ENCODE measurements at regions of chr3 and their contacts with region 1.

Region 1: DNA sequence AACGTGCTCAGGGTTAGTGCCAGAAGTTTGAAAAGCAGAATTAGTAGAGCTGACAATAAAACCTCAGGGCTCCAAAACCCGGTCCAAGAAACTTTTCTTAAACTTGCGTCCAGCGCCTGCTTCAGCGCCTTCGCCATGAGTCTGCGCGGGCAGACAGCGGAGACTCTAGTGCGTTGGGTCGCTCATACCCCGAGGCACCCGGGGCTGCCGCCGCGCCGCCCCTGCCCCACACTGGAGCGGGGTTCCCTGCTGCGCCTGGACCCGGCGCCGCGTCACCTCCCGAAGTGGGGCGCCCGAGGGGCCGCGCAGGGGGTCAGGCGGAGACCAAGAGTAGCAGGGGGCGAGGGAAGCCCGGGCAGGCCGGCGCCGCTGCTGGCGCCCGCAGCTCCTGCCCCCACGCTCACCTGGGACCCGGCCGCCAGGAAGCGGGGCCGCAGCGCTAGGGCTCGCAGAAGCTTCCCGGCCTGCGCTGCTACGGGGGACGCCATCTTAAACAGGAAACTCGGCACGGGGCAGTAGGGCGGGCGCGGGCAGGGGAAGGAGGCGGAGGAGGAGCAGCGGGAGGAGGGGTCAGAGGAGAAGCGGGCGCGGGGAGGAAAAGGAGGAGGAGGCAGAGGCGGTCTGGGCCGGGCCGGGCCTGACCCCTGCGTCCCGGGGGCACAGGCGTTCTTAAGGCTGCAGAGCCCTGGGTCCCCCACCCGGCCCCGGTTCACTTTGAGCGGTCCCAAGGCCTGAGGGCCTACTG is at the start of gene SUCLG2:
- DNase-seq: peak; percentile 80
- ATAC-seq: peak; percentile 83
- H3K4me3 Mint-ChIP-seq: peak within 1 kb of the TSS; percentile 86
- H3K27ac Mint-ChIP-seq: peak within 1 kb of the TSS; percentile 87
- H3K4me1 Mint-ChIP-seq: peaks cover 63% of the 10 kb centered on the region
- H3K27me3 Mint-ChIP-seq: no peaks in the 10 kb centered on the region
- CTCF ChIP-seq: no peak
- total RNA-seq, gene SUCLG2: 38.9 and 40.8 TPM in 2 replicates

Region 2: GRCh38 chr3:66220602-66221377 is 1433.5 kb before region 1 on chr3 and contains the start of gene SLC25A26:
- CTCF ChIA-PET with region 1: no interaction called
- POLR2A ChIA-PET with region 1: no interaction called
- intact Hi-C with region 1: loop called (anchors 1 kb)
- DNase-seq: peak; percentile 90
- ATAC-seq: peak; percentile 96
- H3K4me3 Mint-ChIP-seq: peak within 1 kb of the TSS; percentile 98
- H3K27ac Mint-ChIP-seq: peak within 1 kb of the TSS; percentile 93
- H3K4me1 Mint-ChIP-seq: peaks cover 40% of the 10 kb centered on the region
- H3K27me3 Mint-ChIP-seq: peaks cover 3% of the 10 kb centered on the region
- CTCF ChIP-seq: no peak
- total RNA-seq, gene SLC25A26: 20.8 and 23.2 TPM in 2 replicates

Region 3: GRCh38 chr3:67685499-67685898 is 31.2 kb after region 1 on chr3:
- CTCF ChIA-PET with region 1: interaction called, 3 read pairs
- POLR2A ChIA-PET with region 1: interaction called, 23 read pairs
- intact Hi-C with region 1: loop called (anchors 1 kb)
- DNase-seq: no peak
- ATAC-seq: peak; percentile 91
- H3K4me3 Mint-ChIP-seq: peak overlapping the region; percentile 68
- H3K27ac Mint-ChIP-seq: peak overlapping the region; percentile 91
- H3K4me1 Mint-ChIP-seq: peaks cover 36% of the 10 kb centered on the region
- H3K27me3 Mint-ChIP-seq: no peaks in the 10 kb centered on the region
- CTCF ChIP-seq: no peak

Region 4: DNA sequence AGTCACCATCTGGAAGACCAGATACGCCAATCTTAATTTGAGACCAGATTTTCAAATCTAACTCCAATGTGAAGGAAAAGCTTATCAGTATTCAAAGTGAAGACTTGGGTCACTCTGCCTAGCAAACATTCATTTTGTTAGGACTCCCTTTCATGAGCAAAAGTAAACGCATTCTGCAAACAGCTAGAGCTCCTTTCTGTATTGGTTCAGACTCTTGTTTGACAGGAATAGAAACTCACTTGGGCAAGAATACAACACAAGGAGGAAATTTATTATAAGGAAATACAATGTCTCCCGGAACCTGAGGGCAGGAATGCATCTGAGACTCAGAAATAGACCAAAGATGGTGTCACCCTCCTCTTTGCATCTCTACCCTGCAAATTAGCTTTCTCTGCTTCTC is 719.5 kb after region 1 on chr3:
- CTCF ChIA-PET with region 1: no interaction called
- POLR2A ChIA-PET with region 1: no interaction called
- intact Hi-C with region 1: no loop called
- DNase-seq: no peak
- ATAC-seq: no peak
- H3K4me3 Mint-ChIP-seq: no peak overlapping the region
- H3K27ac Mint-ChIP-seq: no peak overlapping the region
- H3K4me1 Mint-ChIP-seq: no peaks in the 10 kb centered on the region
- H3K27me3 Mint-ChIP-seq: no peaks in the 10 kb centered on the region
- CTCF ChIP-seq: no peak

Measured in activated B cell treated with CpG ODN at 0.5 μM for 24 hours (primary cell).